Gastrocnemius medialis (tissue), 4 donors: ENCODE measurements at regions of chr6 and their contacts with region 1.

Region 1: GRCh38 chr6:149903938-149904611 is 6.2 kb upstream of the RAET1E start:
- DNase-seq: no peak
- ATAC-seq: peak in 1 of 2 donors; percentile 28
- H3K4me3 ChIP-seq: no peak overlapping the region
- H3K27ac ChIP-seq: no peak overlapping the region
- H3K4me1 ChIP-seq: peaks cover 7 to 8% of the 10 kb centered on the region in 2 donors
- H3K27me3 ChIP-seq: no peaks in the 10 kb centered on the region
- CTCF ChIP-seq: no peak
- POLR2A ChIP-seq: no peak

Region 2: GRCh38 chr6:148874698-148875293 is 1029.3 kb before region 1 on chr6:
- in situ Hi-C with region 1: no loop called
- intact Hi-C with region 1: no loop called
- DNase-seq: no peak
- ATAC-seq: no peak
- H3K4me3 ChIP-seq: no peak overlapping the region
- H3K27ac ChIP-seq: no peak overlapping the region
- H3K4me1 ChIP-seq: no peaks in the 10 kb centered on the region
- H3K27me3 ChIP-seq: no peaks in the 10 kb centered on the region
- CTCF ChIP-seq: no peak
- POLR2A ChIP-seq: no peak

Region 3: DNA sequence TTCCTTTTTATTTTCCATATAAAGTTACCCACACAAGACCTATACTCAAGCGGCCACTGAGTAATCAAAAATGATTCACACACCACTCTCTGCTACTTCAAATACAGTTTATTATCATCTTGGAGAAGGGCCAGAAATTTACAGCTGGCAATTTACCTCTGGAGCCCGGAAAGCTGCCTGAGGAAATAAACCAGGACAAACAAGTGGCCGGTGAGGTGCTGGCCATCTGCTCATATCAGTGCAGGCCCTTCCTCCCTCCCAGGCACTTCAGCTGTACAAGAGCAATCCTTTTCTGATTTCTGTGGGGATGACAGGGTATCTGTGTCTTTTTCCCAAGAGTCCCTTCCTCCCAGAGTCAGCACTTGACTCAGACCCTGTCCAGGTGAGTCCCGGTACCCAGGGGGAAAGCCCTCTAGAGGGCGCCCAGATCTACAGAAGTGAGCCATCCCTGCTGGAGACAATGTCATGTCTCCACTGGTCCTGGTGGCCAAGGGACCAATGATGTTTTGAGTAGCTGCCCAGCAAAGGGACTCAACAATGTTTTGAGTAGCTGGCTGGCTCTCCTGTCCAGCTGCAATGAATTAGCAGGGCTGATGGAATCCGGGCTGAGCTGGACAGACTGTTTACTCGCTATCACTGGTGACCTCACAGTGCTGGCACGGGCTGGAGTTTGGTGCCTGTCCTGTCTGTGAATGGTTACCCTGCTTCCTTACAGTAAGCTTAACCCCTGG is 63.6 kb before region 1 on chr6:
- in situ Hi-C with region 1: loop called in 1 of 4 experiments (anchors 10 kb)
- intact Hi-C with region 1: no loop called
- DNase-seq: peak; percentile 68 to 81
- ATAC-seq: peak; percentile 87 to 94
- H3K4me3 ChIP-seq: no peak overlapping the region
- H3K27ac ChIP-seq: peak overlapping the region in 1 of 4 donors; percentile 17
- H3K4me1 ChIP-seq: peaks cover 6 to 9% of the 10 kb centered on the region in 2 donors
- H3K27me3 ChIP-seq: no peaks in the 10 kb centered on the region
- CTCF ChIP-seq: peak; percentile 38 to 78 (median 68)
- POLR2A ChIP-seq: no peak

Region 4: DNA sequence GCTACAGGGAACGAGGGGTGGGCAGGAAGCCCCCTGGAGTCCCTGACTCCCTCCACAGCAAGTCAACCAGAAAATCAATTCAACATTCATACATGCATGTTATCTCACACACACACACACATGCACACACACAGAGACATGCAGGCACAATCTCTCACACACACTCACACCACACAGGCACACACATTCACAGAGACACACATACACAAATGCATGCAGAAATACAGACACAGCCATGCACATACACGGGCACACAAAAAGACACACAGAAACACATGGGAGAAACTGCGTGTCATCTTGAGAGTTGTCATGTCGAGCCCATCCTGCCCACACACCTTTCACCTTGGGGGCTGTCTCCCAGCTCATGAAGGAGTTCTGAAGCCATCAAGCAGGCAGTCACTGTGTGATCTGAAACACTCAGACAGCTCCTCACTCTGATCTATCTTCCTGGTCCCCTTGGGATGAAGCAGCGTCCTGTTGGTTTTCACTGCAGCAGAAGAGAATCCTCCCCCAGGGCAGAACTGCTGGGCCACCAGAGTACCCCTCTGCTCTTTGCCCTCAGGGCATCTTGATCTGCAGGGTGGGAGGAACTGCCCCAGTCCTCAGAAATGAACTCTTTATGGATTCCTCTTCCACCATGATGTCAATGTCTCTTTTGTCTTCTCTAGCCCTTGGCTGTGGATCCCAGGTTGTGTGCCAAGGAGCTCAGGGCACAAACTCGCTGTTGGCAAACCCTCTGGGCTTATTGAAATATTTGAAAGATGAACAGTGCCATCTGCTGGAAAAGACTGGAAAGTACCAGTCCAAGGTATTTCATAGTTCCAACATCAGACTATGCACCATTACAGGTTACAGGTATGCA is 112.5 kb after region 1 on chr6:
- in situ Hi-C with region 1: no loop called
- intact Hi-C with region 1: no loop called
- DNase-seq: peak; percentile 20 to 52
- ATAC-seq: peak; percentile 87 to 90
- H3K4me3 ChIP-seq: no peak overlapping the region
- H3K27ac ChIP-seq: no peak overlapping the region
- H3K4me1 ChIP-seq: no peaks in the 10 kb centered on the region
- H3K27me3 ChIP-seq: peaks cover 38 to 52% (median 52%) of the 10 kb centered on the region in 3 donors
- CTCF ChIP-seq: peak; percentile 68 to 82 (median 81)
- POLR2A ChIP-seq: no peak

Region 5: DNA sequence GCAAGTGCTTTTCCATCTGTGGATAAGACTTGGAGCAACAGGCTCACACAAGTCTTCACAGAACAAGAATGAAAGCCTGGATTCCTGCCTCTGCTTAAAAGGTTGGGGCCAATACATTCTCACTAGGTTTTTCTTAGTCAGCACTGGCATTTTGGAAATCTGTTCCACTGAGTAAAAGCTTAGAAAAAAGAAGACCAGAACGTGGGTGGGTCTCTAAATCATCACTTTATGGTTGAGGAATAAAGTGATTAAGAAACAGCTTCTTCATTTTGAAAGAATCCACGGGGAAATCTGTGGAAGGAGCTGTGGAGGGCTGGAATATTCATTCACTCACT is 249.4 kb after region 1 on chr6:
- in situ Hi-C with region 1: no loop called
- intact Hi-C with region 1: no loop called
- DNase-seq: no peak
- ATAC-seq: no peak
- H3K4me3 ChIP-seq: no peak overlapping the region
- H3K27ac ChIP-seq: no peak overlapping the region
- H3K4me1 ChIP-seq: peaks cover 23 to 26% of the 10 kb centered on the region in 2 donors
- H3K27me3 ChIP-seq: no peaks in the 10 kb centered on the region
- CTCF ChIP-seq: no peak
- POLR2A ChIP-seq: no peak